ENCODE measurements at regions of chr15 and their contacts with region 1.

Region 1: GRCh38 chr15:91142114-91142731 is 42.2 kb downstream of the SV2B start:
- DNase-seq: peak; percentile 25
- H3K4me3 Mint-ChIP-seq: no peak overlapping the region
- H3K27ac Mint-ChIP-seq: no peak overlapping the region
- H3K4me1 Mint-ChIP-seq: peaks cover 11% of the 10 kb centered on the region
- H3K27me3 Mint-ChIP-seq: peaks cover 75% of the 10 kb centered on the region
- CTCF ChIP-seq: peak; percentile 52

Region 2: DNA sequence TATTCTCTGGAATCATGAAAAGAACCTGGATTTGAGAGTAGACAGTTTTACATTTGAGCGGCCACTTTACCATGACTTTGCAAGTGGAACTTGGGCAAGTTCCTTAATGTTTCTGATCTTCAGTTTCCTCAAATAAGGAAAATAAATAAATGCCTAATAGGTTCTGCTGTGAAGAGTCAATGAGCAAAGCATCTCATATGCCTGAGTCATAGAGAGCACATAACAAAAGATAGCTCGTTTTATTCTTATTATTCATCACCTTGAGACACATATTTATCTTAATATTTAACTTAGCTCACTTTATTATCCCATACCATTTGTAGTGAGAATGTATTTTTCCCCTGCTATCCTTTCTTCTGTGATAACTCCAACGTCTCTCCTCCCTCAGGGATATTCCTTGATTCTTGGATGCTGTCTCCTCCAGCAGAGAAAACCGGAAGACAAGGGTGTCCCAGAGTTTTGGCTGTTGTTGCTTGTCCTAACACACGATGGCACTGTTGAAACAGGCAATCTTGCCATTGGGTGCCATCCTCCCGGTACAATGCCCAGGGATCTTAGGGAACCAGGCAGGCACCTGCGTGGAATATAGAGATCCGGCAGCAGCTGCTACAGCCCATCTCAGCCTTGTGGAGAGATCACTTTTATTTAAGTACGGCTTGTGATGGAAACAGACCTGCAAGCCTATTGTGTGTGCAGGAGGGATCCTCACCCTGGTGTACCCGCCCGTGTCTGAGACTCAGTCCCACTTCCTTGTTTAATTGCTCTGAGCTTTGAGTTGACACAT is 86.5 kb before region 1 on chr15:
- CTCF ChIA-PET with region 1: no interaction called
- intact Hi-C with region 1: loop called (anchors 1 kb)
- DNase-seq: peak; percentile 81
- H3K4me3 Mint-ChIP-seq: no peak overlapping the region
- H3K27ac Mint-ChIP-seq: no peak overlapping the region
- H3K4me1 Mint-ChIP-seq: peaks cover 9% of the 10 kb centered on the region
- H3K27me3 Mint-ChIP-seq: peaks cover 97% of the 10 kb centered on the region
- CTCF ChIP-seq: peak; percentile 62

Region 3: DNA sequence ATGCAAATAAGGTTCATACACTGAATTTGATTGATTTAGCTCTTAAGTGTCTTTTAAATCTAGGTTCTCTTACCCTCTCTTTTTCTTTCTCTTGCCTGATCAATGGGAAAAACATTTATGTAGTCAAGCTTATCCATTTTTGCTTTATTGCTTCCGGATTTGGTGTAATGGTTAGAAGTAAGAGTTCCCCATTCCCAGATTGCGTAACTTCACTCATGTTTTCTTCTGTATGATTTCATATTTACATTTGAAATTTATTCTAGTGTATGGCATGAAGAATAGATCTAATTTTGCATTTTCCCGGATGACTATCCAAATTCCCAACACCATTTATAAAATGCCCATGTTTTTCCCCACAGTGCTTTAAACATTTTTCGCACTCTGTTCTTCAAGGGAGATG is 70.1 kb before region 1 on chr15:
- CTCF ChIA-PET with region 1: interaction called, 3 read pairs
- intact Hi-C with region 1: loop called (anchors 5 kb)
- DNase-seq: no peak
- H3K4me3 Mint-ChIP-seq: no peak overlapping the region
- H3K27ac Mint-ChIP-seq: no peak overlapping the region
- H3K4me1 Mint-ChIP-seq: peaks cover 11% of the 10 kb centered on the region
- H3K27me3 Mint-ChIP-seq: peaks cover 9% of the 10 kb centered on the region
- CTCF ChIP-seq: no peak

Region 4: GRCh38 chr15:91126080-91126479 is 16.1 kb before region 1 on chr15:
- CTCF ChIA-PET with region 1: no interaction called
- intact Hi-C with region 1: no loop called
- DNase-seq: peak; percentile 45
- H3K4me3 Mint-ChIP-seq: no peak overlapping the region
- H3K27ac Mint-ChIP-seq: no peak overlapping the region
- H3K4me1 Mint-ChIP-seq: peaks cover 9% of the 10 kb centered on the region
- H3K27me3 Mint-ChIP-seq: no peaks in the 10 kb centered on the region
- CTCF ChIP-seq: no peak

Region 5: DNA sequence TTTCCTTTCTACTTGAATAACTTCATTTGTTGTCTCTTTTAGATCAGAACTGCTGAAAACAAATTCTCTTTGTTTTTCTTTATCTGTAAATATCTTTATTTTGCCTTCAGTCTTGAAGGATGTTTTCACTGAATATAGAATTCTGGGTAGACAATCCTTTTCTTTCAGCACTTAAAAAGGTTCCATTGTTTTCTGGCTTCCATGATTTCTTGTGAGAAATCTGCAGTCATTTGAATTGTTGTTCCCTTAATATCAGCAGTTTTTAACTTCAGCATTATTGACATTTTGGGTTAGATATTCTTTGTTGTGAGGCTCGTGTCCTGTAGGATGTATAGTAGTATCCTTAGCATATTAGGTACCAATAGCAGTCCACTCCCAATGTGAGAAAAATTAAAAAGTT is 23.6 kb after region 1 on chr15:
- CTCF ChIA-PET with region 1: no interaction called
- intact Hi-C with region 1: no loop called
- DNase-seq: no peak
- H3K4me3 Mint-ChIP-seq: no peak overlapping the region
- H3K27ac Mint-ChIP-seq: no peak overlapping the region
- H3K4me1 Mint-ChIP-seq: no peaks in the 10 kb centered on the region
- H3K27me3 Mint-ChIP-seq: peaks cover 28% of the 10 kb centered on the region
- CTCF ChIP-seq: no peak

Region 6: GRCh38 chr15:91186904-91187648 is 44.9 kb after region 1 on chr15:
- CTCF ChIA-PET with region 1: no interaction called
- intact Hi-C with region 1: no loop called
- DNase-seq: peak; percentile 47
- H3K4me3 Mint-ChIP-seq: no peak overlapping the region
- H3K27ac Mint-ChIP-seq: no peak overlapping the region
- H3K4me1 Mint-ChIP-seq: peaks cover 10% of the 10 kb centered on the region
- H3K27me3 Mint-ChIP-seq: peaks cover 55% of the 10 kb centered on the region
- CTCF ChIP-seq: no peak

Region 7: GRCh38 chr15:91224755-91225380 is 82.6 kb after region 1 on chr15:
- CTCF ChIA-PET with region 1: no interaction called
- intact Hi-C with region 1: loop called (anchors 5 kb)
- DNase-seq: peak; percentile 72
- H3K4me3 Mint-ChIP-seq: no peak overlapping the region
- H3K27ac Mint-ChIP-seq: no peak overlapping the region
- H3K4me1 Mint-ChIP-seq: no peaks in the 10 kb centered on the region
- H3K27me3 Mint-ChIP-seq: peaks cover 98% of the 10 kb centered on the region
- CTCF ChIP-seq: peak; percentile 64